GM10248 (cell line): ENCODE measurements at regions of chr7 and their contacts with region 1.

Region 1: DNA sequence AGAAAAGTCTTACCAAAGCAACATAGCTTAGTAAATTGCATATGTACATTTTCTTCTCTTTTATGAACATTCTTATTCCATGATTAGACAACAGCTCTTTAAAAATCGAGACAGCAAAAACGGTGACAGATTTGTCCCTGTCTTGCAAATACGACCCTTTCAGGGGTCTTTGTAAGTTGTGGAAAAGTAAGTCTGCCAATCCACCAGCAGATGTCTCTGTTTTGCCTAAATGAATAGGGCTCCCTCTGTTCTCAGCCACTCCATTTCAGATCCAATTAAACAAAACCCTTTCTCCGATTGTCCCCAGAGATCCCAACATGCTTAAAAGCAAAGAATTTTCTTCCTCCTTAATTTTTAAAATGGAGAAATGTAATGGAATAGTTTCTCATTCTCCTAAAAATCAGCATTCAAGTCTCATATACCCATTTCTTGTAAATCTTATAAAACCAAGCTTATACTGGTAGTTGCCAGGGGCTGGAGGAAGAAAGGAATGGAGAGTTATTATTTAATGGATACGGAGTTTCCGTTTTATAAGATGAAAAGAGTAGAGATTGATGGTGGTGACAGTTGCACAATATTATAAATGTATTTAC is 61.0 kb upstream of the NFE2L3 start:
- DNase-seq: peak; percentile 54
- CTCF ChIP-seq: peak; percentile 47

Region 2: GRCh38 chr7:26071622-26072456 is 19.2 kb before region 1 on chr7:
- CTCF ChIA-PET with region 1: interaction called, 47 read pairs
- POLR2A ChIA-PET with region 1: no interaction called
- DNase-seq: no peak
- CTCF ChIP-seq: no peak

Region 3: GRCh38 chr7:26101361-26102151 is 10.5 kb after region 1 on chr7:
- CTCF ChIA-PET with region 1: interaction called, 10 read pairs
- POLR2A ChIA-PET with region 1: no interaction called
- DNase-seq: peak; percentile 44
- CTCF ChIP-seq: no peak

Region 4: GRCh38 chr7:26151953-26152781 is 61.1 kb after region 1 on chr7 and contains the start of gene NFE2L3:
- CTCF ChIA-PET with region 1: interaction called, 12 read pairs
- POLR2A ChIA-PET with region 1: interaction called, 3 read pairs
- DNase-seq: peak; percentile 94
- CTCF ChIP-seq: peak; percentile 13

Region 5: DNA sequence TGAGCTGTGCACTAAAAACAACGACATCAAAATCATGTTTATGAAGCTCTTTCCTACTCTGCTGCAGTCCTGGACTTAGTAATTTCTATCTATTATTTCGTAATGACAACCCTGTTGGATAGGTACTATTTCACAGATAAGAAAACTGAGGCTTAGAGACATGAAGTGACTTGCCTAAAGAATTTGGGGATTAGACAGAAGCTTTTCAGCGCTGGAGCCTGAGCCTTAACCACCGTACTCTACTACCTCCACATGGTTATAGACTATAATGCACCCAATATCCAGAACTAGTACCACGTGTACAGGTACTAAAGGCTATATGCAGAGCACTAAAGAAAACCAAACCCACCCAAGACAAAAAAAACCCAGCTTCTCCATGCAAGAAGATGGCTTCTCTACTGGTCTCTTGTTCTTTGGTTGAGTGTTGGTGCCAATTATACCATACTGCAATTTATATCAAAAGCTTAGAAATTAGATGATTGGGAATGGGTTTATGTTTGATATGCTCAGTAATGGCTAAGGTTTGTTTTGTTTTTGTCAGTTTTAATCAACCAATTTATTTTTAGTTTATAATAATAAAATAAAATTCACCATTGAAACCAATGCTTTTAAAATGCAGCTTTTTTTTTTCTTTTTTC is 194.1 kb after region 1 on chr7:
- CTCF ChIA-PET with region 1: interaction called, 11 read pairs
- POLR2A ChIA-PET with region 1: no interaction called
- DNase-seq: no peak
- CTCF ChIP-seq: peak; percentile 11